ENCODE measurements at regions of chr16 and their contacts with region 1.

Region 1: DNA sequence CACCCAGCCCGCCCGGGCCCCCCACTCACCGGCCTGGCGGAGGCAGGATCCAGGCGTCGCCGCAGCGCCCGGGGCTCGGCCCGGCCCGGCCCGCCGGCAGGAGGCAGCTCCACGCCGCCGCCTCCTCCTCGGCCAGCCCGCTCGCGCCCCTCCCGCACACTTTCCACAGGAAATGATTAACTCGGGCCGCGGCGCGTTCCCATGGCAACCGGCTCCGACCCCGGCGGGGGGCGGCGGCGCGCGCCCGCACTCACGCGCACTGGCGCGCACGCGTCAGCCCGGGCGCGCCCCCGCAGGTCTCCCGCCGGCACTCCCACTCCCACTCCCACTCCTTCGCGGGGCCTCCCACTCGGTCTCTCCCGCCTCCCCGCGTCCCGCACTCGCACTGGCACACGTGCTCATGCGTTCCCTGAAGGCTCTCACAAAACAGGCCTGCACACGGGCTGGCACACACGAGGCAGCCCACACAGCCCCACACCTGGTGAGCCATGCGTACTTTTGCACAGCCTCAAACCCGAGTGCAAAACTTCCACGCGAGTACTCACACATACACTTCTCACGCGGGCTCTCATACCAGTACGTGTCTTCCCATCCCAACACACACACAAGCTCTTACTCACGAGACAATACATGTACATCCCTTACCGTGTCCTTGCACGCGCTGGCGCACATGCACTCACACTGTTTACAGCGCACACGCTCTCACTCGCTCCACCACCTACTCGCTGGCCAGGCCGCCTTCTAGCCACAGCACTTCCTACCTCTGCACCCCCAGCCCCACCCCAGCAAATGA is at the start of gene KIFC3:
- DNase-seq: peak; percentile 90 to 91
- ATAC-seq: peak; percentile 9 to 76 (median 34)
- H3K4me3 ChIP-seq: peak within 1 kb of the TSS; percentile 51 to 85 (median 66)
- H3K27ac ChIP-seq: peak within 1 kb of the TSS; percentile 89 to 99 (median 96)
- H3K4me1 ChIP-seq: peaks cover 34 to 81% (median 68%) of the 10 kb centered on the region in 9 donors
- H3K27me3 ChIP-seq: peaks cover 0 to 12% (median 0%) of the 10 kb centered on the region in 7 donors
- CTCF ChIP-seq: peak in 5 of 9 donors; percentile 34 to 60 (median 44)
- total RNA-seq, gene KIFC3: 42.5 to 91.4 (median 63.5) TPM

Region 2: GRCh38 chr16:57700781-57701551 is 101.6 kb before region 1 on chr16:
- intact Hi-C with region 1: no loop called
- DNase-seq: no peak
- ATAC-seq: no peak
- H3K4me3 ChIP-seq: no peak overlapping the region
- H3K27ac ChIP-seq: no peak overlapping the region
- H3K4me1 ChIP-seq: no peaks in the 10 kb centered on the region
- H3K27me3 ChIP-seq: no peaks in the 10 kb centered on the region
- CTCF ChIP-seq: no peak

Region 3: DNA sequence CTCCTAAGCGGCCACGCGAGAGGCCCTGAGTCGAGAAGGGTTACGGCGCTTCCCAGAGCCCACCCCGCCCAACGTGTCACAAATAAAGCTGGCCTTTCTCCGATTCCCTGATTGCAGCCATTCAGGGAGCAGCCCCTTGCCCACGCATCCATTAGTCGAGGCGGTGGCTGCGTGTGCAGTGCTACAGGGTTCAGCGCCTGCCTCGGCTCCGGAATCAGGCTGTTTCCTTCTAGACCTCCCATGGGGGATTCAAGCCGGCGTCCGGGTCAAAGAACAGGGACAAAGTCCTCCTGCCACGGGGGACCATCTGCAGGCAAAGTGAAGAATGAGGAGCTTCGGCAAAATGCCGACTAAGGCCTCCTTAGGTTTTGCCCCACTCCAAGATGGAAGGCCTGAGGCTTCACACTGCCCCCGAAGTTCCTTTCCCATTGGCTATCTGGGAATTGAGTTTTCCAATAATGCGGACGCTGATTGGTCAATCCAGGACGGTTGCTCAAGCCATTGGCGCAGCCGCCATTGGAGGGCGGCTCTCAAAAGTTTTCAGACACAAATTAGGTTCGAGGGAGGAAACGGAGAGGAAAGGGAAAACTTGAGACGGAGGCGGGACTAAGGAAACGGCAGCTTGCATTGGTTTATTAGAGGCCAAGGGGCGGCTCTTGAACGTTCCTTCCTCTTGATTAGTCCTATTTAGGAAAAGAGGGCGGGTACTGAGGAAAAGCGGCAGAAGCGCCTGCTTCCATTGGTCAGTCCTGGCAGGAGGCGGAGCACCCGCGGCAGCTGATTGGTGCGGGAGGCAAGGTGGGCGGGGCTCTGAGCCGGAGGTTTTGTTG is 67.4 kb before region 1 on chr16:
- intact Hi-C with region 1: loop called in 1 of 10 experiments (anchors 2 kb)
- DNase-seq: peak; percentile 98 to 99
- ATAC-seq: peak; percentile 94 to 97 (median 96)
- H3K4me3 ChIP-seq: peak overlapping the region; percentile 70 to 94 (median 80)
- H3K27ac ChIP-seq: peak overlapping the region; percentile 83 to 96 (median 91)
- H3K4me1 ChIP-seq: peaks cover 11 to 27% (median 19%) of the 10 kb centered on the region in 9 donors
- H3K27me3 ChIP-seq: no peaks in the 10 kb centered on the region
- CTCF ChIP-seq: no peak

Region 4: DNA sequence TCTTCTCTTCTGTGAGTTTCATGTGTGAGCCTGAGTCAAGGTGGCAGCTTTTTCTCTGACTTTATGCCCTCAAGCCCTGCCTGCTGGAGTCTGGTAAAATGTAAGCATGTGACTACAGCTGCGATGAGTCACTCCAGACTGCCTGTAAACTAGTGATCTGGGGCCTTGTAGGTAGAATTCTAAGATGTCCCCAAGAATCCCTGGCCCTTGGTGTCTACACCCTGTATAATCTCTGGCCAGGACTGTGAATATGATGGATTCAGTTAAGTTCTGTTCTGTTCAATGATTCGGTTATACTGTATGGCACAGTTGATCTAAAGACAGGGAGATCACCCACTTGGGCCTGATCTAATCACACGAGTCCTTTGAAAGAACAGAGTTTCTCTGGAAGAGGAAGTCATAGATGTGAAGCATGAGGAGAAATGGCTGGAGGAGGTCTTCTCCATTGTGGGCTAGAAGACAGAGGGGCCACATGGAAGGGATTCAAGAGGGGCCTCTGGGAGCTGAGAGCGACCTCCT is 462.5 kb after region 1 on chr16:
- intact Hi-C with region 1: no loop called
- DNase-seq: no peak
- ATAC-seq: peak in 4 of 8 donors; percentile 45 to 62 (median 52)
- H3K4me3 ChIP-seq: no peak overlapping the region
- H3K27ac ChIP-seq: no peak overlapping the region
- H3K4me1 ChIP-seq: peaks cover 0 to 11% (median 0%) of the 10 kb centered on the region in 9 donors
- H3K27me3 ChIP-seq: no peaks in the 10 kb centered on the region
- CTCF ChIP-seq: no peak